Activated CD4-positive, alpha-beta memory T cell treated with anti-CD3 and anti-CD28 coated beads for 36 hours (primary cell): ENCODE measurements at regions of chr22 and their contacts with region 1.

Region 1: GRCh38 chr22:40436505-40437451 is 66.4 kb downstream of the SGSM3 start:
- DNase-seq: no peak
- H3K4me3 Mint-ChIP-seq: no peak overlapping the region
- H3K27ac Mint-ChIP-seq: peak overlapping the region; percentile 54
- H3K4me1 Mint-ChIP-seq: peaks cover 49% of the 10 kb centered on the region
- H3K27me3 Mint-ChIP-seq: no peaks in the 10 kb centered on the region

Region 2: GRCh38 chr22:40426594-40427333 is 10.0 kb before region 1 on chr22:
- CTCF ChIA-PET with region 1: interaction called, 17 read pairs
- POLR2A ChIA-PET with region 1: no interaction called
- intact Hi-C with region 1: no loop called
- DNase-seq: no peak
- H3K4me3 Mint-ChIP-seq: no peak overlapping the region
- H3K27ac Mint-ChIP-seq: no peak overlapping the region
- H3K4me1 Mint-ChIP-seq: peaks cover 4% of the 10 kb centered on the region
- H3K27me3 Mint-ChIP-seq: no peaks in the 10 kb centered on the region

Region 3: DNA sequence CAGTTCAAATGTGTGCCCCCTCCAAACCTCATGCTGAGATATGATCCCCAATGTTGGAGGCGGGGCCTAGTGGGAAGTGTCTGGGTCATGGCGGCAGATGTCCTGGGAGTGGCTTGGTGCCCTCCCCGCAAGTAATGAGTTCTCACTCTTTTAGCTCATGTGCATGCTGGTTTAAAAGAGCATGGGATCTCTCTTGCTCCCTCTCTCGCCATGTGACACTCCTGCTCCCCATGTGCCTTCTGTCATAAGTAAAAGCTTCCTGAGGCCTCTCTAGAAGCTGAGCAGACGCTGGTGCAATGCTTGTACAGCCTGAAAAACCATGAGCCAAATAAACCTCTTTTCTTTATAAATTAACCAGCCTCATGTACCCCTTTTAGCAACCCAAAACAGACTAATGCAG is 32.4 kb after region 1 on chr22:
- CTCF ChIA-PET with region 1: interaction called, 12 read pairs
- POLR2A ChIA-PET with region 1: interaction called, 3 read pairs
- intact Hi-C with region 1: no loop called
- DNase-seq: no peak
- H3K4me3 Mint-ChIP-seq: no peak overlapping the region
- H3K27ac Mint-ChIP-seq: no peak overlapping the region
- H3K4me1 Mint-ChIP-seq: peaks cover 33% of the 10 kb centered on the region
- H3K27me3 Mint-ChIP-seq: no peaks in the 10 kb centered on the region

Region 4: GRCh38 chr22:40487663-40488249 is 51.0 kb after region 1 on chr22:
- CTCF ChIA-PET with region 1: interaction called, 102 read pairs
- POLR2A ChIA-PET with region 1: no interaction called
- intact Hi-C with region 1: loop called (anchors 1 kb)
- DNase-seq: no peak
- H3K4me3 Mint-ChIP-seq: no peak overlapping the region
- H3K27ac Mint-ChIP-seq: no peak overlapping the region
- H3K4me1 Mint-ChIP-seq: peaks cover 32% of the 10 kb centered on the region
- H3K27me3 Mint-ChIP-seq: no peaks in the 10 kb centered on the region

Region 5: GRCh38 chr22:40645579-40646197 is 208.9 kb after region 1 on chr22:
- CTCF ChIA-PET with region 1: interaction called, 188 read pairs
- POLR2A ChIA-PET with region 1: interaction called, 5 read pairs
- intact Hi-C with region 1: loop called (anchors 1 kb)
- DNase-seq: no peak
- H3K4me3 Mint-ChIP-seq: no peak overlapping the region
- H3K27ac Mint-ChIP-seq: no peak overlapping the region
- H3K4me1 Mint-ChIP-seq: peaks cover 4% of the 10 kb centered on the region
- H3K27me3 Mint-ChIP-seq: no peaks in the 10 kb centered on the region

Region 6: GRCh38 chr22:40898850-40899357 is 462.1 kb after region 1 on chr22:
- CTCF ChIA-PET with region 1: interaction called, 13 read pairs
- POLR2A ChIA-PET with region 1: no interaction called
- intact Hi-C with region 1: no loop called
- DNase-seq: peak; percentile 41
- H3K4me3 Mint-ChIP-seq: peak overlapping the region; percentile 20
- H3K27ac Mint-ChIP-seq: peak overlapping the region; percentile 88
- H3K4me1 Mint-ChIP-seq: peaks cover 14% of the 10 kb centered on the region
- H3K27me3 Mint-ChIP-seq: no peaks in the 10 kb centered on the region